MCF 10A (cell line): ENCODE measurements at regions of chr9 and their contacts with region 1.

Region 1: GRCh38 chr9:127423934-127424675 is at the start of gene ZNF79:
- DNase-seq: peak; percentile 92
- H3K4me3 Mint-ChIP-seq: peak within 1 kb of the TSS; percentile 99
- H3K27ac Mint-ChIP-seq: peak within 1 kb of the TSS; percentile 98
- H3K4me1 Mint-ChIP-seq: peaks cover 21% of the 10 kb centered on the region
- H3K27me3 Mint-ChIP-seq: no peaks in the 10 kb centered on the region
- CTCF ChIP-seq: no peak
- total RNA-seq, gene ZNF79: 7.9 and 9.3 TPM in 2 replicates

Region 2: GRCh38 chr9:127244609-127245601 is 179.2 kb before region 1 on chr9:
- CTCF ChIA-PET with region 1: no interaction called
- POLR2A ChIA-PET with region 1: interaction called, 12 read pairs
- intact Hi-C with region 1: no loop called
- DNase-seq: peak; percentile 96
- H3K4me3 Mint-ChIP-seq: peak overlapping the region; percentile 95
- H3K27ac Mint-ChIP-seq: peak overlapping the region; percentile 94
- H3K4me1 Mint-ChIP-seq: peaks cover 4% of the 10 kb centered on the region
- H3K27me3 Mint-ChIP-seq: no peaks in the 10 kb centered on the region
- CTCF ChIP-seq: no peak

Region 3: GRCh38 chr9:127444921-127445850 is 21.1 kb after region 1 on chr9:
- CTCF ChIA-PET with region 1: no interaction called
- POLR2A ChIA-PET with region 1: interaction called, 91 read pairs
- intact Hi-C with region 1: no loop called
- DNase-seq: peak; percentile 67
- H3K4me3 Mint-ChIP-seq: no peak overlapping the region
- H3K27ac Mint-ChIP-seq: peak overlapping the region; percentile 66
- H3K4me1 Mint-ChIP-seq: peaks cover 48% of the 10 kb centered on the region
- H3K27me3 Mint-ChIP-seq: no peaks in the 10 kb centered on the region
- CTCF ChIP-seq: no peak

Region 4: DNA sequence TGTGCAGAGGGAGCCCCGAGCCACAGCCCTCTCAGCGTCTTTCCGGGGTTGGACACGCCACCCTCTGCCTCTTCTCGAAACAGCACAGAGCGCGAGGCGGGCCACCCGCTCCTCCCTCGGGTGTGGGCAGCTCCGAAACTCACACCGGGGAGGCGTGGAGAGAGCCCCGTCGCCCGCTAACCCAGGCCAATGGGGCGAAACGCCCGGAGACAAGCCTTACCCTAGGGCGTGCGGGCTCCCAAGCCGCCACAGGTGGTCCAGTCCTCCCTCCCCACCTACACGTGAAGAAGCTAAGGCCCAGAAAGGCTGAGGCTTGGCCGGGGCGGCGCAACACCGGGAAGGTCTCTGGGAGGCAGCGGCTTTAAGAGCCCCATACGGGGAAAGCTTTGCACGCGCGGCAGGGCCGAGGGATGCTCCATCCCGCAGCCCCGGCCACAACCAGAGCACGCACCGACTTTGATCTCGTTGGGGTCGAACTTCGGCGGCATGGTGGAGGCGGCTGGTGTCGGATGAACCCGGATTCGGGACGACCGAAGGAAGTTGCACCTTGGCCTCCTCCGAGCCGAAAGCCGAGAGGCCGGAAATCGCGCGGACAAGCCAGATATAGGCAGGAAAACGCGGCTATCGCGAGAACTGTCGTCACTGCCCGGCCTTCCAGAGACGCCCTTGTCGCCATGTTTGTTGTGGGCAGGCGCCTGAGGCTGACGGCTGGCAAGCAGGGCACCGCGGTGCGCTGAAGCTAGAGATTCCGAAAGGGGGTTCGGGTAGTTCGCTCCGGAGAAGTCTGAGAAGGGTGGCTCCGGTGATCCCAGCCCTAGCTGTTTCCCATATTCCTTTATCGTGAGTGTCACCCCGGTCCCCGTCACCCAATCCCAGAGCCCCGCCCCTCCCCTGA is 27.0 kb after region 1 on chr9 and contains the starts of genes LRSAM1 and RPL12:
- CTCF ChIA-PET with region 1: interaction called, 3 read pairs
- POLR2A ChIA-PET with region 1: interaction called, 91 read pairs
- intact Hi-C with region 1: loop called (anchors 1 kb)
- DNase-seq: peak; percentile 94
- H3K4me3 Mint-ChIP-seq: peak within 1 kb of the TSS; percentile 93
- H3K27ac Mint-ChIP-seq: peak within 1 kb of the TSS; percentile 97
- H3K4me1 Mint-ChIP-seq: peaks cover 40% of the 10 kb centered on the region
- H3K27me3 Mint-ChIP-seq: no peaks in the 10 kb centered on the region
- CTCF ChIP-seq: no peak
- total RNA-seq, gene LRSAM1: 23.5 and 26.2 TPM in 2 replicates
- total RNA-seq, gene RPL12: 3,086 and 3,252 TPM in 2 replicates

Region 5: GRCh38 chr9:127568971-127569885 is 145.1 kb after region 1 on chr9:
- CTCF ChIA-PET with region 1: no interaction called
- POLR2A ChIA-PET with region 1: interaction called, 10 read pairs
- intact Hi-C with region 1: no loop called
- DNase-seq: peak; percentile 86
- H3K4me3 Mint-ChIP-seq: peak overlapping the region; percentile 98
- H3K27ac Mint-ChIP-seq: peak overlapping the region; percentile 55
- H3K4me1 Mint-ChIP-seq: peaks cover 32% of the 10 kb centered on the region
- H3K27me3 Mint-ChIP-seq: no peaks in the 10 kb centered on the region
- CTCF ChIP-seq: no peak